WTC11 (cell line): ENCODE measurements at regions of chr5 and their contacts with region 1.

Region 1: GRCh38 chr5:2563046-2563445 is 188.4 kb downstream of the IRX2 start:
- DNase-seq: peak; percentile 25
- ATAC-seq: 0 out of 2 replicates have a peak, but pooled peaks have one; percentile 24
- H3K4me3 Mint-ChIP-seq: no peak overlapping the region
- H3K27ac Mint-ChIP-seq: no peak overlapping the region; the same call in 1 of the 2 replicates
- H3K4me1 Mint-ChIP-seq: no peaks in the 10 kb centered on the region
- H3K27me3 Mint-ChIP-seq: peaks cover 1% of the 10 kb centered on the region
- CTCF ChIP-seq: no peak

Region 2: DNA sequence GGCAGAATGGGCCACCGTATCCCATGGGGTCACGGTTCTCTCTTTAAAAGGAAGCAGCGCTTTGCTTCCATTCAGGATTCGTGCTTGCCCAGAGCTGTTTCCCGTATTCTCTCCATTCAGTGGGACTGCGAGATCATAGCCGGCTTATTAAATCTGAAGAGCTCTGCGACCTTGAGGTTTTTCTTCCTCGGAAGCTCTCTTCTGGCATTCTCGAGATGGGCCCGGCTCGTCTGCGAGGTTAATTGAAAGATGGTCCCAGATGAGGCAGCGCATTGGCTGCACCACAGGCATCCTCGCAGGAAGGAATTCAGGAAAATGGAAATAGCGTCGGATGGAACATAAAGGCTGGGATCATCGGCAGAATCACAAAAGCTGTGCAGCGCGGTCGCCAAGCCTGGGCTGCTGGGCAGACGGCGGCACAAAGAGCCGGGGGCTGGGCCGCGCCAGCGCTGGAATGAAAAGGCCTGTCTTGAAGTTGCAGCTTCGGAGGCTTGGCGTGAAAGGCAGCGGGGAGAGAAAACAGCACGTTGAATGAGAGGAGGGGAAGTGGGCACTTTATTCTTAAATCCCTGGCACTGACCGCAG is 47.8 kb before region 1 on chr5:
- CTCF ChIA-PET with region 1: no interaction called
- POLR2A ChIA-PET with region 1: no interaction called
- DNase-seq: no peak
- ATAC-seq: no peak
- H3K4me3 Mint-ChIP-seq: no peak overlapping the region
- H3K27ac Mint-ChIP-seq: no peak overlapping the region
- H3K4me1 Mint-ChIP-seq: peaks cover 4% of the 10 kb centered on the region
- H3K27me3 Mint-ChIP-seq: no peaks in the 10 kb centered on the region; the same call in 1 of the 2 replicates
- CTCF ChIP-seq: no peak

Region 3: DNA sequence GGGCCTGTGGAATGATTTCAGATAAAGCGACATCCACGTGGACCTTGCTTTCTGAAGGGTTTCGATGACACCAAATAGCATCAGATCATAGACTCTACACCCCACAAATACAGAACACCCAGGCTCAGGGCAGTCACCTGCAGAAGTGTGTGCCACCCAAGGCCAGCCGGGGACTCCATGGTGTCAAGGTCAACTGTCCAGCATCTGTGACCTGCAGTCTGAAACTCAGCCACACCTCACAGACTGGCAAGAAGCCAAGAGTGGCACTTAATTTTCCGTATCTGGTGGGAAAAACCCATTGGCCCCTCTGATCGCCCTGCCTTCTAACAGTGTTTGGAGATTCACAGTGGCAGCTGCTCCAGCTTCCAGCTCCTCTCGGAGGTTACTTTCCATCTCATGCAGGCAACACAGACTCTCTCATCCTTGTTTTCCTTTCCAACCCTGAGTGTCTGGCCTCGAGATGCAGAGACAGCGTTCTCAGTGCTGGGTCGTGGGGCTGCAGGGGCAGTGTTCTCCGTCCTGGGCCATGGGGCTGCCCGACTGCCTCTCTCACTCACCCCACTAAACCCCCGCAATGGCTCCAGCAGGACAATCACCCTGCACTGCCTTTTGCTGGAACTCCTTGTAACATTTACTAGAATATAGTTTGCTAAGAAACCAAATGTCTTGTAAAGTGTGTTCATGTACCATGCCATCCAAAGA is 33.5 kb before region 1 on chr5:
- CTCF ChIA-PET with region 1: no interaction called
- POLR2A ChIA-PET with region 1: no interaction called
- DNase-seq: no peak
- ATAC-seq: no peak
- H3K4me3 Mint-ChIP-seq: no peak overlapping the region
- H3K27ac Mint-ChIP-seq: no peak overlapping the region
- H3K4me1 Mint-ChIP-seq: no peaks in the 10 kb centered on the region
- H3K27me3 Mint-ChIP-seq: peaks cover 5% of the 10 kb centered on the region; the same call in 1 of the 2 replicates
- CTCF ChIP-seq: no peak

Region 4: GRCh38 chr5:2805080-2805479 is 242.0 kb after region 1 on chr5:
- CTCF ChIA-PET with region 1: interaction called, 11 read pairs
- POLR2A ChIA-PET with region 1: no interaction called
- DNase-seq: peak; percentile 75
- ATAC-seq: peak; percentile 98
- H3K4me3 Mint-ChIP-seq: no peak overlapping the region
- H3K27ac Mint-ChIP-seq: no peak overlapping the region
- H3K4me1 Mint-ChIP-seq: 0 out of 2 replicates have a peak, but pooled peaks cover 3% of the 10 kb centered on the region
- H3K27me3 Mint-ChIP-seq: no peaks in the 10 kb centered on the region
- CTCF ChIP-seq: peak; percentile 31; the same call in 1 of the 2 replicates